Activated CD4-positive, alpha-beta memory T cell treated with anti-CD3 and anti-CD28 coated beads, Interleukin-2, amount 10 ng/mL, durations not matched to agents 7 days and 5 days (primary cell): ENCODE measurements at regions of chr2 and their contacts with region 1.

Region 1: DNA sequence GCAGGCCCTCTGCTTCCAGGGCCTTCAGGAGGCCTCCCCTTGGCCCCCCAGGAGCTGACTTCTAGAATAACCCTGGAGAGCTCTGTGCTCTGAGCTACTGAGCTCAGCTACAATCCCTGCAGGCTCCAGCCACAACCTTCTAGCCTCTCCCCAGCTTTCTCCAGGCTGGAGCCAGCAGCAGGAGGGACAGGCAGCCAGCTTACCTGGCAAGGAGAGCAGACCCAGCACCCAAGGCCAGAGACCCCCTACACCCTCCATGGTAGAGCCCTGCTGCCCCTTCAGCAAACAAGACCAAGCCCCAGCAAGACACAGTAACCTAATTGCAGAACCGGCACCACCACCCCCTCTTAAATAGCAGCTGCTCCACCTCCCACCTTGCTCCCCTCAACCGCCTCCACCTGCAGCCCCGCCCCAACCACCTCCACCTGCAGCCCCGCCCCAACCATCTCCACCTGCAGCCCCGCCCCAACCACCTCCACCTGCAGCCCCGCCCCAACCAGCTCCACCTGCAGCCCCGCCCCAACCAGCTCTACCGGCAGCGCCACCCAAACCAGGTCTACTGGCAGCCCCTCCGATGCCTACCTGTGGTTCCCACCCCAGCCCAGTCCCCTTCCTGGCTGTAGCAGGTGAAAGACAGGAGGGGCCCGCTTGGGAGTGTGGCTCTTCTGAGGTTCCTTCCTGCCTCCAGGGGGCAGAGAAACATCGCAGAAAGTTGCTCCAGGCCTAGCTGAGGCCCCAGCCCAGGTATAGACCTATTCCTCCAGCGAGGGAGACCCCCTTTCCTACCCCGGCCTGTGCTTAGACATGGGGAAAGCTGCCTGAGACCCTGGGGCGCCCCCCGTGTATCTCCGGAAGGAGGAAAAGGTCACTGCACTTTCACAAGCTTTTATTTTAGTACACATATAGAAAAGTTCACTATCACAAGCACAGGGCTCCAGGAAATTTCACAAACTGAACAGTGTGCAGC is at the start of gene ASTL:
- DNase-seq: peak; percentile 72
- H3K4me3 Mint-ChIP-seq: no peak within 1 kb of the TSS
- H3K27ac Mint-ChIP-seq: no peak within 1 kb of the TSS
- H3K4me1 Mint-ChIP-seq: peaks cover 19% of the 10 kb centered on the region
- H3K27me3 Mint-ChIP-seq: no peaks in the 10 kb centered on the region
- total RNA-seq, gene ASTL: 0.25 to 0.53 TPM

Region 2: GRCh38 chr2:96180521-96180920 is 42.1 kb after region 1 on chr2:
- CTCF ChIA-PET with region 1: interaction called, 323 read pairs
- POLR2A ChIA-PET with region 1: interaction called, 34 read pairs
- DNase-seq: no peak
- H3K4me3 Mint-ChIP-seq: no peak overlapping the region
- H3K27ac Mint-ChIP-seq: no peak overlapping the region
- H3K4me1 Mint-ChIP-seq: peaks cover 7% of the 10 kb centered on the region
- H3K27me3 Mint-ChIP-seq: peaks cover 4% of the 10 kb centered on the region

Region 3: DNA sequence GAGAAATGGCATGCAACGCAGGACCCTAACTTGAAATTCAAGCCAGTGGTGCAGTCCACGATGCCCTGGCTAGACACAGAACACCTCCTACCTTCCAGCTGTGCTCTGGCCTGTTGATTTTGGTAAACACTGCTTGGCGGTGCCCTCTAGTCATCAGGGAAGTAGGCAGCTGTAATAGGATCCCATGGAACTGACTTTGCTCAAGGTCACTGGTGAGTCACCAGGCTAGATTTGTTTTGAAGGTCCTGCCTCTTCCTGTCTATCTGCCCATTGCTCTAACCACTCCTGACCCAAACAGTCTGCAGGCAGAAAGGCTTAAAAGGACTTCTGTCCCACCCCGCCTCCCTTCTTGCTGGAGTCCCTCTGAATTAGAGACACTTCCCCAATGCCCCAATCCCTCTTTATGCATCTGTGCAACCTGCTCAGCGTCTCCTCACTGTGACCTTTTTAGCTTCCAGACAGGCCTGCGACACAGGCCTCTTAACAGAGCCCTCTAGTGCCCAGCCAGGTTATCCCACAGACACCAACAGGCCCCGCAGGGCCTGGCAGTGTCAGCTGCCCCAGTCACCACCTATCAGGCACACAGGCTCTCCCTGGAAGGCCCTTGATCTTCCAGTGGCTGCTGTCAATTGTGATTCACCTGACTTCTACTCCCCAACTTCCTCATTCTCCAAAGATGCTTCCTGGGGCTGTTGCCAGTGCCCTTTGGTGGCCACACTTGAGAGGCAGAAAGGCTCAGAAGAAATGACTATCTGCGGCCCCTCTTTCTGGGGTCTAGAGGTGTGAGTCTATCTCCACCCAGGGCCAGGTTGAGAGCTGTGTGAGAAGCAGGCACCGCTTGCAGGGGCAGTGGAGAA is 122.2 kb after region 1 on chr2:
- CTCF ChIA-PET with region 1: interaction called, 16 read pairs
- POLR2A ChIA-PET with region 1: interaction called, 3 read pairs
- DNase-seq: peak; percentile 50
- H3K4me3 Mint-ChIP-seq: no peak overlapping the region
- H3K27ac Mint-ChIP-seq: peak overlapping the region; percentile 76
- H3K4me1 Mint-ChIP-seq: peaks cover 72% of the 10 kb centered on the region
- H3K27me3 Mint-ChIP-seq: no peaks in the 10 kb centered on the region